ENCODE measurements at regions of chr10 and their contacts with region 1.

Region 1: DNA sequence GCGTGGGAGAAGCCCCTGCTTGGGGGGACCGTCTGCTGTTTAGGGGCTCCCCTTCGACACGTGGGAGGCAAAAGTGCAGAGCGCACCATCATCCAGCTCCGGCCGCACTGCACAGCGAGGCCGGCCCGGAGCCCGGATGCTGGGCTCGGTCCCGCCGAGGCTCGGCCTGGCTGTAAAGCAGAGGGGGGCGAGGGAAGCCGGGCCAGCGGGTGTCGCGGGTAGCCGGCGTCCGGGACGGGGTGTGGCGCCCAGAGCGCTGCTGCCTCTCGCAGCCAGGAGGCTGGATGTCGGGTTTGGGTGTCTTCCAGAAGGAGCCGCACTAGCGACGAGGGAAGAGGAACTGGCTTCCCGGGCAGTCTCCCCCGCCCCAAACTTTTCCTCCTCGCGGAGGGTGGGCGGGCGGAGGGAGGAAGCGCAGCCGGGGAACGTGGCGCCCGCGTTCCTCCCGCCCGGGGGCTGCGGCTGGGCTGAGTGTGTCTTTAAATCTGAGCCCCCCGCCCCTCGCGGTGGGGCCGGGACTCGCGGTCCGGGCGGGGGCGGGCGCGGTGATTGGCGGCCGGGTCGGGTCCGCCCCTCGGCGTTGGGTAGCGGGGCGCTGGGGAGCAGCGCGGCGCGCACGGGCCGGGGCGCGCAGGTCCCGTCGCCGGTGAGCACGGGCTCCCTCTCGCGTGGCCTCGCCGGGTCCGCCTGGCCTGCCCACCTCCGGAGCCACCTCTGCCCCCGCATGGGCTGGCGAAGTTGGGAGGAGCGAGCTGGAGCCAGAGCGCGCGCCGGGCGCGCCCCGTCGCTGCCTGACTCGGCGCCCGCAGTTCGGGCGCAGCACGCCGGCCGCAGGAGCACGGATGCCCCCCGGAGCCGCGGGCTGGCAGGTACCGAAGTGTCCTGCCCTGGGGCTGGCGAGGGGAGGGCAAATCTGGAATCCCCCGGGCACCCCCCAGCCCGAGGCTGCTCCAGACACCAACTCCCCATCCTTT is at the start of gene PALD1:
- DNase-seq: peak; percentile 63
- ATAC-seq: peak; percentile 40
- H3K4me3 ChIP-seq: peak within 1 kb of the TSS in 4 of 5 experiments; percentile 50 to 64 (median 58)
- H3K4me3 Mint-ChIP-seq: peak within 1 kb of the TSS; percentile 88
- H3K27ac ChIP-seq: peak within 1 kb of the TSS in 1 of 2 donors; percentile 59
- H3K27ac Mint-ChIP-seq: peak within 1 kb of the TSS; percentile 90
- H3K4me1 ChIP-seq: peaks cover 40 to 42% of the 10 kb centered on the region in 2 donors
- H3K4me1 Mint-ChIP-seq: peaks cover 55% of the 10 kb centered on the region
- H3K27me3 ChIP-seq: peaks cover 0 to 7% (median 0%) of the 10 kb centered on the region in 4 experiments
- H3K27me3 Mint-ChIP-seq: no peaks in the 10 kb centered on the region
- CTCF ChIP-seq: peak; percentile 6
- total RNA-seq, gene PALD1: 2.2 and 2.4 TPM in 2 replicates

Region 2: DNA sequence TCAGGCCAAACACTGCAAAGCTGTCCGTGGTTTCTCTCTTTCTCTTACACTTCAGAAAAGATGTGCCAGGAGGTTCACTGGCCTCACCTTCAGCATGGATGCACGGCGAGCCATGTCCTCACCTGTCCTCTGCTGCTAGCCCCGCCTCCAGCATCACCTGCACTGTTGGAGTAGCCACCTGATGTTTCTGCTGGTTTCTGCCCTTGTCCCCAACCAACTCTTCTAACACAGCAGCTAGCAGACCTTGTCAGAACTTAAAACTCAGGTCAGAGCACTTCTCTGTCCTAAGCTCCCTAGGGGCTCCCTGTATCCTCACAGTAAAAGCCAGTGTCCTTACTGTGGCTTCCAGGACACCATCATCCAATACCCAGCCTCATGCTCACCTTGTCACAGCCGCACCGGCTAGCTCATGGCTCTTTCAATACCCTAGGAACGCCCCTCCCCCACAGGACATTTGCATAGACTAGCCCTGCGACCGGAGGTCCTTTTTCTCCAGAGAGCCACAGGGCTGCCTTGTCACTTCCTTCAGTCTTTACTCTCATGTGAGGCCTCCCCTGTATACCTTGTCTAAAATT is 15.3 kb after region 1 on chr10:
- CTCF ChIA-PET with region 1: interaction called, 11 read pairs
- POLR2A ChIA-PET with region 1: interaction called, 3 read pairs
- intact Hi-C with region 1: loop called (anchors 1 kb)
- DNase-seq: peak; percentile 78
- ATAC-seq: peak; percentile 73
- H3K4me3 ChIP-seq: peak overlapping the region in 3 of 5 experiments; percentile 13 to 57 (median 28)
- H3K4me3 Mint-ChIP-seq: peak overlapping the region; percentile 68
- H3K27ac ChIP-seq: peak overlapping the region; percentile 81 to 88
- H3K27ac Mint-ChIP-seq: peak overlapping the region; percentile 89
- H3K4me1 ChIP-seq: peaks cover 65 to 69% of the 10 kb centered on the region in 2 donors
- H3K4me1 Mint-ChIP-seq: peaks cover 76% of the 10 kb centered on the region
- H3K27me3 ChIP-seq: no peaks in the 10 kb centered on the region
- H3K27me3 Mint-ChIP-seq: no peaks in the 10 kb centered on the region
- CTCF ChIP-seq: no peak

Region 3: DNA sequence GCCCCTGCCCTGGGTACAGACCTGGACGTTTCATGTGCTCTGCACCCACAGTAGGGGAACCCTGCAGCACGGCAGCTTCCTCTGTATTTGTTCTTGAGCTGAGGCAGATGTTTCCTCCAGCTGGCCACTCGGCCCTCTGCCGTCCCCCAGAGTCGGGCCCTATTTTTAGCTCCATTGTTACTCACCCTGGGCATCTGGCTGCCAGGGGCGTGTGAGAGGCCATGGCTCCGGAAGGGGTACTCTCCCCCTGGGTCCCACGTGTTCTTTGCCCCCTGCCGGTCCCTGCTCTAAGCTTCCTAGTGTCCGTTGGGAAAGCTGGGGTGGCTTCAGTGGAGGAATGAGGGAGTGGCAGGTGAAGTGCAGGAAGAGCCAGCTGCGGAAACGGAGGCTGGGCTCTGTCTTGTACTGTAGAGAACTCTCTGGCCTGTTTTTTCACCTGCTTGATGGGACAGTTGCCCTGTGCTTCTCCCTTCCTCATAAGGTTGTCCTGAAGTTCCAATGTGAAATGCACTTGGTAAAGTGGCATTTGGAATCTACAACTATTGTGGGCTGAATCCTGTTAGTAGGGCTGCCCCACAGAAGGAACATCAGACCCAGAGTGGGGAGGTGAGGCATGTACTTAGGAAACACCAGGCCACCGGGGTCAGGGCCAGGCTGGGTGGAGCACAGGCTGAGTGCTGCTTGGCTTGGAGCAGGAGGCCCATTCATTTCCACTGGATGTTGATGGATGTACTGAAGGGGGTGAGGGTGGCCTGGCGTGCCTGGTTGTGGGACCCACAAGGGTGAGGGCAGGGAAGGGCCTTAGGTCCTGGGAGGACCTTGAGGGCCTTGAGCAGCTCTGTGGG is 30.7 kb after region 1 on chr10:
- CTCF ChIA-PET with region 1: no interaction called
- POLR2A ChIA-PET with region 1: interaction called, 4 read pairs
- intact Hi-C with region 1: loop called (anchors 5 kb)
- DNase-seq: no peak
- ATAC-seq: peak; percentile 46
- H3K4me3 ChIP-seq: peak overlapping the region in 1 of 5 experiments; percentile 8
- H3K4me3 Mint-ChIP-seq: peak overlapping the region; percentile 63
- H3K27ac ChIP-seq: no peak overlapping the region
- H3K27ac Mint-ChIP-seq: peak overlapping the region; percentile 56
- H3K4me1 ChIP-seq: peaks cover 24 to 25% of the 10 kb centered on the region in 2 donors
- H3K4me1 Mint-ChIP-seq: peaks cover 35% of the 10 kb centered on the region
- H3K27me3 ChIP-seq: peaks cover 0 to 5% (median 0%) of the 10 kb centered on the region in 4 experiments
- H3K27me3 Mint-ChIP-seq: no peaks in the 10 kb centered on the region
- CTCF ChIP-seq: no peak